CD4-positive, alpha-beta memory T cell (primary cell): ENCODE measurements at regions of chr15 and their contacts with region 1.

Region 1: GRCh38 chr15:40857601-40858341 is 13.9 kb downstream of the SPINT1 start:
- DNase-seq: peak; percentile 72 to 82 (median 73)
- H3K4me3 ChIP-seq: no peak overlapping the region
- H3K4me3 Mint-ChIP-seq: no peak overlapping the region
- H3K27ac ChIP-seq: no peak overlapping the region
- H3K27ac Mint-ChIP-seq: peak overlapping the region in 1 of 7 donors; percentile 12
- H3K4me1 ChIP-seq: peaks cover 12% of the 10 kb centered on the region
- H3K4me1 Mint-ChIP-seq: peaks cover 6 to 20% (median 7%) of the 10 kb centered on the region in 4 donors
- H3K27me3 ChIP-seq: no peaks in the 10 kb centered on the region
- H3K27me3 Mint-ChIP-seq: peaks cover 1 to 4% of the 10 kb centered on the region in 2 donors

Region 2: GRCh38 chr15:40528801-40529200 is 329.0 kb before region 1 on chr15:
- CTCF ChIA-PET with region 1: no interaction called
- POLR2A ChIA-PET with region 1: no interaction called
- intact Hi-C with region 1: no loop called
- DNase-seq: no peak
- H3K4me3 ChIP-seq: no peak overlapping the region
- H3K4me3 Mint-ChIP-seq: no peak overlapping the region
- H3K27ac ChIP-seq: no peak overlapping the region
- H3K27ac Mint-ChIP-seq: no peak overlapping the region
- H3K4me1 ChIP-seq: no peaks in the 10 kb centered on the region
- H3K4me1 Mint-ChIP-seq: no peaks in the 10 kb centered on the region
- H3K27me3 ChIP-seq: no peaks in the 10 kb centered on the region
- H3K27me3 Mint-ChIP-seq: no peaks in the 10 kb centered on the region

Region 3: GRCh38 chr15:40838776-40839175 is 19.0 kb before region 1 on chr15:
- CTCF ChIA-PET with region 1: interaction called, 24 read pairs
- POLR2A ChIA-PET with region 1: no interaction called
- intact Hi-C with region 1: no loop called
- DNase-seq: no peak
- H3K4me3 ChIP-seq: no peak overlapping the region
- H3K4me3 Mint-ChIP-seq: no peak overlapping the region
- H3K27ac ChIP-seq: no peak overlapping the region
- H3K27ac Mint-ChIP-seq: peak overlapping the region in 1 of 7 donors; percentile 12
- H3K4me1 ChIP-seq: peaks cover 3% of the 10 kb centered on the region
- H3K4me1 Mint-ChIP-seq: peaks cover 0 to 5% (median 3%) of the 10 kb centered on the region in 4 donors
- H3K27me3 ChIP-seq: no peaks in the 10 kb centered on the region
- H3K27me3 Mint-ChIP-seq: peaks cover 0 to 2% of the 10 kb centered on the region in 2 donors

Region 4: GRCh38 chr15:40873625-40874561 is 16.1 kb after region 1 on chr15 and contains the start of gene RHOV:
- CTCF ChIA-PET with region 1: interaction called, 18 read pairs
- POLR2A ChIA-PET with region 1: interaction called, 4 read pairs
- intact Hi-C with region 1: no loop called
- DNase-seq: peak; percentile 31 to 62 (median 37)
- H3K4me3 ChIP-seq: peak within 1 kb of the TSS in 1 of 2 donors; percentile 44
- H3K4me3 Mint-ChIP-seq: peak within 1 kb of the TSS; percentile 78 to 93 (median 88)
- H3K27ac ChIP-seq: no peak within 1 kb of the TSS
- H3K27ac Mint-ChIP-seq: no peak within 1 kb of the TSS
- H3K4me1 ChIP-seq: peaks cover 6% of the 10 kb centered on the region
- H3K4me1 Mint-ChIP-seq: peaks cover 2 to 19% (median 8%) of the 10 kb centered on the region in 4 donors
- H3K27me3 ChIP-seq: no peaks in the 10 kb centered on the region
- H3K27me3 Mint-ChIP-seq: peaks cover 1% of the 10 kb centered on the region in 2 donors
- total RNA-seq, gene RHOV: not detected

Region 5: GRCh38 chr15:41022487-41023090 is 164.8 kb after region 1 on chr15:
- CTCF ChIA-PET with region 1: interaction called, 4 read pairs
- POLR2A ChIA-PET with region 1: no interaction called
- intact Hi-C with region 1: loop called (anchors 5 kb)
- DNase-seq: peak; percentile 33 to 59 (median 37)
- H3K4me3 ChIP-seq: no peak overlapping the region
- H3K4me3 Mint-ChIP-seq: no peak overlapping the region
- H3K27ac ChIP-seq: no peak overlapping the region
- H3K27ac Mint-ChIP-seq: peak overlapping the region in 1 of 7 donors; percentile 29
- H3K4me1 ChIP-seq: no peaks in the 10 kb centered on the region
- H3K4me1 Mint-ChIP-seq: peaks cover 1 to 7% (median 2%) of the 10 kb centered on the region in 4 donors
- H3K27me3 ChIP-seq: no peaks in the 10 kb centered on the region
- H3K27me3 Mint-ChIP-seq: no peaks in the 10 kb centered on the region